Activated CD4-positive, alpha-beta memory T cell treated with anti-CD3 and anti-CD28 coated beads for 36 hours (primary cell): ENCODE measurements at regions of chr3 and their contacts with region 1.

Region 1: DNA sequence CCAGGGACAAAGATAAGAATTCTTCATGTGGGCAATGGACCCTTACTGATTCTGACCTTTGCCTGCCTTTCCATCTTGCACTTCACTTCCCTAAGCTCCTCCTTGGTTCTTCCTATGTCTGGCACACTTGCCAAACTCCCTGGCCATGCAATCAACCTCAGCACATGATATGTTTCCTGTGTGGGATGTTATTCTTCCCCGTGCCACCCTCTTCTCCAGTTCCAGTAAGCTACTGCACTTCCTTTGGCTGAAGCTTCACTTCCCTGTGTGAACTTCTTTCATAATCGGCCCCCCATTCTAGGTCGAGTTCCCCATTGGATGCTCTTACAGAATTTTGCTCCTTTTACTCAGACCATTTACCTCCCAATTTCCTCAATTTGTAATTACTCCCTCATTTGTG is 10.7 kb upstream of the TASOR start:
- DNase-seq: no peak
- H3K4me3 Mint-ChIP-seq: no peak overlapping the region
- H3K27ac Mint-ChIP-seq: no peak overlapping the region
- H3K4me1 Mint-ChIP-seq: peaks cover 42% of the 10 kb centered on the region
- H3K27me3 Mint-ChIP-seq: no peaks in the 10 kb centered on the region

Region 2: GRCh38 chr3:56347219-56347871 is 346.4 kb before region 1 on chr3:
- CTCF ChIA-PET with region 1: no interaction called
- POLR2A ChIA-PET with region 1: no interaction called
- intact Hi-C with region 1: loop called (anchors 10 kb)
- DNase-seq: peak; percentile 54
- H3K4me3 Mint-ChIP-seq: no peak overlapping the region
- H3K27ac Mint-ChIP-seq: no peak overlapping the region
- H3K4me1 Mint-ChIP-seq: no peaks in the 10 kb centered on the region
- H3K27me3 Mint-ChIP-seq: no peaks in the 10 kb centered on the region

Region 3: GRCh38 chr3:56366641-56367162 is 327.0 kb before region 1 on chr3:
- CTCF ChIA-PET with region 1: no interaction called
- POLR2A ChIA-PET with region 1: no interaction called
- intact Hi-C with region 1: no loop called
- DNase-seq: no peak
- H3K4me3 Mint-ChIP-seq: no peak overlapping the region
- H3K27ac Mint-ChIP-seq: no peak overlapping the region
- H3K4me1 Mint-ChIP-seq: no peaks in the 10 kb centered on the region
- H3K27me3 Mint-ChIP-seq: peaks cover 7% of the 10 kb centered on the region

Region 4: GRCh38 chr3:56682462-56683121 is 11.2 kb before region 1 on chr3:
- CTCF ChIA-PET with region 1: interaction called, 3 read pairs
- POLR2A ChIA-PET with region 1: interaction called, 12 read pairs
- intact Hi-C with region 1: loop called (anchors 1 kb)
- DNase-seq: peak; percentile 83
- H3K4me3 Mint-ChIP-seq: peak overlapping the region; percentile 97
- H3K27ac Mint-ChIP-seq: peak overlapping the region; percentile 97
- H3K4me1 Mint-ChIP-seq: peaks cover 37% of the 10 kb centered on the region
- H3K27me3 Mint-ChIP-seq: no peaks in the 10 kb centered on the region